ENCODE measurements at regions of chr17 and their contacts with region 1.

Region 1: GRCh38 chr17:17313350-17313991 is 10.3 kb downstream of the NT5M start:
- DNase-seq: peak; percentile 74
- H3K4me3 ChIP-seq: no peak overlapping the region
- H3K27ac ChIP-seq: no peak overlapping the region
- H3K4me1 ChIP-seq: no peaks in the 10 kb centered on the region
- CTCF ChIP-seq: peak; percentile 83

Region 2: GRCh38 chr17:16915752-16916556 is 397.5 kb before region 1 on chr17:
- CTCF ChIA-PET with region 1: no interaction called
- POLR2A ChIA-PET with region 1: no interaction called
- intact Hi-C with region 1: no loop called
- DNase-seq: peak; percentile 81
- H3K4me3 ChIP-seq: no peak overlapping the region
- H3K27ac ChIP-seq: no peak overlapping the region
- H3K4me1 ChIP-seq: peaks cover 29% of the 10 kb centered on the region
- CTCF ChIP-seq: peak; percentile 85

Region 3: DNA sequence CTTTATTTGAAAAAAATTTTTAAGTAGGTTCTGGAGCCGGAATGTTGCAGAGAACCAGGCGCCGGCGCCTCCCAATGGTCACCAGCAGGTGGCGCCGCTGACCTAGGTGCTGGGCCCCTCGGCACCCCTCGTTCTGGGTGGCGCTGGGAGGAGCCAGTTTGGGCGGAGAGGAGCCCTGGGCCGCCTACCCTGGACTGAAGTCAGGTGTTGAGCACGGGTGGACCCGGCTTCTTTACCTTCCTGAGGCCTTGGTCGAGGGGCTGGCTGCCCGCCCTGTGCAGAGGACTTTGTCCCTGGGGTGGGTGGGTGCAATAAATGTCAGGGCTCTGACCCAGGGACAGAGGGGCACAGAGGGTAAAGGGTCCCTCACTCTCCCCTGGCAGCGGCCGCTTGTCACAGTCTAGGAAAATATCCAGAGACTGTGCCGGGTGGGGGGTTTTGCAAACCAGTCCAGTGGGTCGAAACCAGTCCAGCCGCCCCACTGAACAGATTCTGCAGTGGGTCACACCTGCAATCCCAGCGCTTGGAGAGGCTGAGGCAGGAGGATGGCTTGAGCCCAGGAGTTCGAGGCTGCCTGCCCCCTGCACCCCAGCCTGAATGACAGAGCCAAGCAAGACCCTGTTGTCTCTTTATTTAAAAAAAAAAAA is 311.5 kb before region 1 on chr17:
- CTCF ChIA-PET with region 1: no interaction called
- POLR2A ChIA-PET with region 1: no interaction called
- intact Hi-C with region 1: loop called (anchors 1 kb)
- DNase-seq: peak; percentile 72
- H3K4me3 ChIP-seq: no peak overlapping the region
- H3K27ac ChIP-seq: no peak overlapping the region
- H3K4me1 ChIP-seq: peaks cover 7% of the 10 kb centered on the region
- CTCF ChIP-seq: peak; percentile 98

Region 4: DNA sequence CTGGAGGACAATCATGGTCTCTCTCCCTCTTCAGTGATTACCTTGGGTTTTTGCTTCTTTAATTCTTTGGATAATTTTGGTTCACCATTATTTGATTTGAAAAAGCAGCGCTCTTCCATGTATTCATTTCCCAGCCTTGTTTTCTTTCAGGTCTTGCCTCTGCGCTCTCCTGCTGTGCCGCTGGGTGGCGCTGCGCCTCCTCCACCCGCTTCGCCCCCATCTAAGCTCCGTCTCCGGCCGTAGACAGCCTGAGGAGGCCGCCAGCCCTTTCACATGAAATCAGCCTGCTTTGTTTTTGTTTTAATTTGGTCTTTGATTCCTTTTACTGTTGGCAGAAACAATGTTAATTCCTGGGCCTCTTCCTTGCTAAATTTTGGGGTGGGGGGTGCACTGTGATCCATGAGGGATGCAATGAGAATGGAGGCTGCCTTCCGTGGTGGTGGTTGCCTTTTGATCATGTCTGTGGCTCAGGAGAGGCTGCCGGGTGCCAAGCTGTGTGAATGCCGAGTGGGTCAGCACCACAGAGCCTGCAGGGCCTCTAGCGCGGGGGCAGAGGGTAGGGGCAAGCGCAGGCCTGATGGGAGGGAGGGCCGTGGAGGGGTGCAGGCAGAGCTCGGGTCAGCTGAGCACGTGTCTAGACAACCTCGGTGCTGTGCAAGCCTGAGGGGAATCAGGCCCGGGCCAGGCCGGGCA is 171.5 kb before region 1 on chr17:
- CTCF ChIA-PET with region 1: no interaction called
- POLR2A ChIA-PET with region 1: no interaction called
- intact Hi-C with region 1: loop called (anchors 1 kb)
- DNase-seq: peak; percentile 48
- H3K4me3 ChIP-seq: no peak overlapping the region
- H3K27ac ChIP-seq: no peak overlapping the region
- H3K4me1 ChIP-seq: peaks cover 18% of the 10 kb centered on the region
- CTCF ChIP-seq: peak; percentile 97

Region 5: GRCh38 chr17:17216776-17217175 is 96.7 kb before region 1 on chr17:
- CTCF ChIA-PET with region 1: no interaction called
- POLR2A ChIA-PET with region 1: no interaction called
- intact Hi-C with region 1: no loop called
- DNase-seq: peak; percentile 22
- H3K4me3 ChIP-seq: no peak overlapping the region
- H3K27ac ChIP-seq: no peak overlapping the region
- H3K4me1 ChIP-seq: no peaks in the 10 kb centered on the region
- CTCF ChIP-seq: peak; percentile 72

Region 6: DNA sequence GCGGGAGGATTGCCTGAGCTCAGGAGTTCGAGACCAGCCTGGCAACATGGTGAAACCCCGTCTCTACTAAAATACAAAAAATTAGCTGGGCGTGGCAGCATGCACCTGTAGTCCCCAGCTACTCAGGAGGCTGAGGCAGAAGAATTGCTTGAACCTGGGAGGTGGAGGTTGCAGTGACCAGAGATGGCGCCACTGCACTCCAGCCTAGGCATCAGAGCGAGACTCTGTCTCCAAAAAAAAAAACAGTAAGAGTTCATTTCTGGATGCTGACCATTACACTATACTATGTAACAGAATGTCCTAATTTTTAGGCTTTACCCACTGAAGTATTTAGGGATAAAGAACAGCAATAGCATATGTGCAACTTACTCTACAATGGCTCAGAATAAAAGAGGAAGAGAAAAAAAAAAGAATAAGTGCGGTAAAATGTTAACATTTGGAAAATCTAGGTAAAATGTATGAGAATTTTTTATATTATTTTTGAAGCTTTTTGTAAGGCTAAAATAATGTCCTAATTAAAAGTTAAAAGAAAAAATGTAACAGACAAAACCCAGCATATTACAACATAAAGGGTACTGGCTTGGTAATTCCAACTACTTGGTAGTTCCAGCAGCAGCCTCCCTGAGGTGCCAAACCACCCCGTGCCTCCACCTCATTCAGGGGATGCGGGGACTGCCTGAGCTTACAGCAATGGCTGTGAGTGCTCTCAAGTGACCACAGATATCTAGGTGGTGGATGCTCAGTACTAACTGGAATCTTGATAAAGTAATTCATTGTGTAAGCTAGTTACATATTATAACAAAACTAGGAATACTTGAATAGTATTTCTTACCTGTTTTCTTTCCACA is 43.3 kb before region 1 on chr17:
- CTCF ChIA-PET with region 1: no interaction called
- POLR2A ChIA-PET with region 1: no interaction called
- intact Hi-C with region 1: loop called (anchors 10 kb)
- DNase-seq: peak; percentile 17
- H3K4me3 ChIP-seq: no peak overlapping the region
- H3K27ac ChIP-seq: no peak overlapping the region
- H3K4me1 ChIP-seq: no peaks in the 10 kb centered on the region
- CTCF ChIP-seq: peak; percentile 75

Region 7: GRCh38 chr17:17280613-17281549 is 32.6 kb before region 1 on chr17 and contains the start of gene COPS3:
- CTCF ChIA-PET with region 1: no interaction called
- POLR2A ChIA-PET with region 1: interaction called, 10 read pairs
- intact Hi-C with region 1: no loop called
- DNase-seq: peak; percentile 99
- H3K4me3 ChIP-seq: peak within 1 kb of the TSS; percentile 80
- H3K27ac ChIP-seq: peak within 1 kb of the TSS; percentile 83
- H3K4me1 ChIP-seq: peaks cover 25% of the 10 kb centered on the region
- CTCF ChIP-seq: no peak
- total RNA-seq, gene COPS3: 69.4 and 83.9 TPM in 2 replicates

Measured in OCI-LY7 (cell line).